AG04450 (cell line): ENCODE measurements at regions of chr11 and their contacts with region 1.

Region 1: DNA sequence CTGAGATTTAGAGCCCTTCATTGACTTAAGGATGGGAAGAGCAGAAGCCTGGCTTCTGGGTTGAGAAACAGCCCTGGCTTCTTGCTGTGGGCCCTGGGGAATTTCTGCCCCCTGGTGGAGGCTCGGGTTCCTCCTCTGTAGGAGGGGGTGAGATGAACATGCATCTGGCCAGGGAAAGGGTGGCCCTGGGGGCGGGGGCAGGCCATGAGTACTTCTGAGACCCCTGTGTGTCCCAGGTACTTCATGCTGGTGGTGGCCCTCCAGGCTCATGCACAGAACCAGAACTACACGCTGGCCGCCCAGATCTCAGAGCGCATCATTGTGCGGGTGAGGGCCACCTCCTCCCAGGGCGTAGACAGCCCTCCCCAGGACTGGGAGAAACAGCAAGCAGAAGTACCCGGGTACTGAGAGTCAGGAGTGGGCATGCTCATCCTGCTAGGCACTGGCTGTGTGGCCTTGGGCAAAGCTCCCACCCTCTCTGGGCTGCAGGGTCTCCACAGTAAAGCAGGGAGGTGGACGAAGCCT is 15.8 kb downstream of the TMEM258 start:
- DNase-seq: peak; percentile 45
- H3K4me3 ChIP-seq: no peak overlapping the region
- H3K27ac ChIP-seq: no peak overlapping the region
- H3K27me3 ChIP-seq: no peaks in the 10 kb centered on the region
- CTCF ChIP-seq: peak; percentile 89

Region 2: DNA sequence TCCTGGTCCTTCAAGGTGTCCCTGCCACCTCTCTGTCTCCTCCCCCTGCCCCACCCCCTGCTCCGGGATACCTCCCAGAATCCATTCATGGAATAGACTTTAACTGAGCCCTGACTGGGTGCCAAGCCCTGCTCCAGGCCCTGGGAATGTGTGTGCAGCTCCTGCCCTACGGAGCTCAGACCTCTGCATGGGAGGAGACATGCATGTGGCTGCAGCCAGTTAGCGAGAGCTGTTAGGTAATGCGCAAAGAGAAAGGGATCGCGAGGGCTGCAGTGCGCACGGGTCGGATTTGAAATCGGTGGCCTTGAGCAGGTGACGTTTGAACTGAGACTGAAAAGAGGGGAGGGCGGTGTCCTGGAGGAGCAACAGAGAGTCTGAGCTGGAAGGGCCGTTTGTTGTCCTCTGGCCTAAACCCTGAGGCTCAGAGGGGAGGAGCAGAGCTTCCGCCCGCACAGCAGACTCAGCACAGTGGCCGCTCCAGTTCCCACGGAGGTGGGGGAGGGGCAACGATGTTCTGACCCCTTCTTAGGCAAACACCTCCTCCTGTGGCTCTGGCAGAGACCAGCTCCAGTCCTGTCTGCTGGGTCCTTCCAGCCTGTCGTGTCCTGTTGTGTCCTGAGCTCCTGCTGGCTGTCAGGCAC is 287.8 kb before region 1 on chr11:
- CTCF ChIA-PET with region 1: no interaction called
- POLR2A ChIA-PET with region 1: no interaction called
- DNase-seq: no peak
- H3K4me3 ChIP-seq: no peak overlapping the region
- H3K27ac ChIP-seq: no peak overlapping the region
- H3K27me3 ChIP-seq: peaks cover 5% of the 10 kb centered on the region
- CTCF ChIP-seq: no peak

Region 3: DNA sequence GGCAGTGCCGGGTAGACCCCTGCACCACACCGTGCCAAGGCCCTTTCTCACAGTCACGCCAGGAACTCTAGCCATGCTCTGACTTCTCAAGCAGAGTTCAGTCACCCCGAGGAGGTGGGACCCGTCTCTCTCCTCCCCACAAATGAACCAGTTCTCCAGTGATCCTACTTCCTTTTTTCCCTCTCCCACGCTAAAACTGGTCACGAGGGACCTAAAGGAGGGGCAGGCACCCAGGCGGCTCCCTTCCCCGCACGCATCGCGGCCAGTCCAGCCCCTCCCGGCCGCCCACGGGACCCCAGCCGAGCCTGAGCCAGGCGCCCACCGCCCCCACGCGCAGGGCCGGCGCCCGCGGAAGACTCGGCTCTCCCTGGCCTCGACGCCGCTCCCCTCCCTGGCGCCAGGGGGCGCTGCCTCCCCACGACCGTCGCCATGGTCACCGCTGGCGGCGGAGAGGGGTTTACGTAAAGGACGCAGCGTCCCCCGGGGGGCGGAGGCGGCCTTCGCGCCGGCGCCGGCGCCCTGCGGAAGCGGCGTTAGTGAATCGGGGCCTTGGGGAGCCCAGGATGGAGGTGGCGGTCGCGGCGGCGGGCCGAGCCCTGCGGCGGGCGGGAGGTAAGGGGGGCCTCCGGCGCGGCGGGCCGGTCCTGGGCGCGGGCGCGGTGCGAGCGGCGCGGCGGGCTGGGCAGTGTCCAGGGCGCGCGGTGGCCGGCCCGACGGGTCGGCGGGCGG is 96.6 kb before region 1 on chr11 and contains the start of gene DAGLA:
- CTCF ChIA-PET with region 1: no interaction called
- POLR2A ChIA-PET with region 1: no interaction called
- DNase-seq: no peak
- H3K4me3 ChIP-seq: peak within 1 kb of the TSS; percentile 62
- H3K27ac ChIP-seq: no peak within 1 kb of the TSS
- H3K27me3 ChIP-seq: peaks cover 57% of the 10 kb centered on the region
- CTCF ChIP-seq: peak; percentile 82
- polyA plus RNA-seq, gene DAGLA: 1.1 and 1.7 TPM in 2 replicates

Region 4: GRCh38 chr11:61747192-61747966 is 29.2 kb before region 1 on chr11:
- CTCF ChIA-PET with region 1: interaction called, 15 read pairs
- POLR2A ChIA-PET with region 1: no interaction called
- DNase-seq: no peak
- H3K4me3 ChIP-seq: no peak overlapping the region
- H3K27ac ChIP-seq: no peak overlapping the region
- H3K27me3 ChIP-seq: no peaks in the 10 kb centered on the region
- CTCF ChIP-seq: peak; percentile 93